ENCODE measurements at regions of chr13 and their contacts with region 1.

Region 1: GRCh38 chr13:49278211-49278610 is 30.5 kb downstream of the CDADC1 start:
- DNase-seq: no peak
- H3K4me3 ChIP-seq: no peak overlapping the region
- H3K27ac ChIP-seq: no peak overlapping the region
- H3K4me1 ChIP-seq: no peaks in the 10 kb centered on the region
- H3K27me3 ChIP-seq: no peaks in the 10 kb centered on the region
- CTCF ChIP-seq: no peak
- POLR2A ChIP-seq: no peak

Region 2: GRCh38 chr13:48595431-48596429 is 682.5 kb before region 1 on chr13:
- CTCF ChIA-PET with region 1: no interaction called
- POLR2A ChIA-PET with region 1: no interaction called
- dilution Hi-C with region 1: no loop called
- intact Hi-C with region 1: loop called (anchors 5 kb)
- DNase-seq: peak; percentile 91
- H3K4me3 ChIP-seq: no peak overlapping the region
- H3K27ac ChIP-seq: no peak overlapping the region
- H3K4me1 ChIP-seq: peaks cover 6% of the 10 kb centered on the region
- H3K27me3 ChIP-seq: peaks cover 4 to 7% of the 10 kb centered on the region in 2 experiments
- CTCF ChIP-seq: peak; percentile 49 to 66
- POLR2A ChIP-seq: no peak

Region 3: DNA sequence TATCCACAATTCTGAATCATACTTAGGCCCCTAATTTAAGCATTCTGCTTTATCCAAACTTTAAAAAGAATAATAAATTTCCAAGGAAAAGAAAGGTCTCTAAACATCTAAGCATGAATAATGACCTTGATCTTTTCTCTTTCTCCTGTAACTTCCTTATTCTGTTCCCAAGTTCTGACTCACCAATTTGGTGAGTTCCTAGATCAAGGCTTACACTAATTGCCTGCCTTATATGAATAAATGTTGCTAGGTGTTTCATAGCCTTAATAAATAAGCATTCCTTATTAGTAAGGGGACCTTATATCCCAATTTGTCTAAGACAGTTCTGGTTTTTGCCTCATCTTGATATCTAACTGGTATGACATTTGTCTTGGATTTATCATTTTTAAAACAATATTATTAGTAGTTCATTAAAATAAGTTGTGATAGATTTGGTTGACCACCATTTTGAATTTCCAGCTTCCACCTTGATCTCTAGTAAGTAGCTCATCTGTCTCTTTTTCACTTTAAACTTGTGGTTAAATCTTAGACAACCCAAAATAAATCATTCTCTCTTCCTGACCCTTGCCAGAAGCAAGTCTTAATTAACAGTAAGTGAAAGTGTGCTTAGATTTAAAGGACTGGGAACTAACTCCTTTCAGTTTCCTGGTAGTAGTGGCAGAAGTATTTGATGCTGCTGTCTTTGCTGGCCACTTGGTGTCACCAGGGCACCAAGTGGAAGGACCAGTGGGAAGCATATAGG is 179.3 kb before region 1 on chr13:
- CTCF ChIA-PET with region 1: interaction called, 123 read pairs
- POLR2A ChIA-PET with region 1: no interaction called
- dilution Hi-C with region 1: no loop called
- intact Hi-C with region 1: loop called (anchors 1 kb)
- DNase-seq: peak; percentile 65
- H3K4me3 ChIP-seq: peak overlapping the region in 1 of 3 experiments; percentile 12
- H3K27ac ChIP-seq: peak overlapping the region; percentile 70
- H3K4me1 ChIP-seq: peaks cover 24% of the 10 kb centered on the region
- H3K27me3 ChIP-seq: no peaks in the 10 kb centered on the region
- CTCF ChIP-seq: peak in 1 of 2 donors; percentile 42
- POLR2A ChIP-seq: no peak

Region 4: DNA sequence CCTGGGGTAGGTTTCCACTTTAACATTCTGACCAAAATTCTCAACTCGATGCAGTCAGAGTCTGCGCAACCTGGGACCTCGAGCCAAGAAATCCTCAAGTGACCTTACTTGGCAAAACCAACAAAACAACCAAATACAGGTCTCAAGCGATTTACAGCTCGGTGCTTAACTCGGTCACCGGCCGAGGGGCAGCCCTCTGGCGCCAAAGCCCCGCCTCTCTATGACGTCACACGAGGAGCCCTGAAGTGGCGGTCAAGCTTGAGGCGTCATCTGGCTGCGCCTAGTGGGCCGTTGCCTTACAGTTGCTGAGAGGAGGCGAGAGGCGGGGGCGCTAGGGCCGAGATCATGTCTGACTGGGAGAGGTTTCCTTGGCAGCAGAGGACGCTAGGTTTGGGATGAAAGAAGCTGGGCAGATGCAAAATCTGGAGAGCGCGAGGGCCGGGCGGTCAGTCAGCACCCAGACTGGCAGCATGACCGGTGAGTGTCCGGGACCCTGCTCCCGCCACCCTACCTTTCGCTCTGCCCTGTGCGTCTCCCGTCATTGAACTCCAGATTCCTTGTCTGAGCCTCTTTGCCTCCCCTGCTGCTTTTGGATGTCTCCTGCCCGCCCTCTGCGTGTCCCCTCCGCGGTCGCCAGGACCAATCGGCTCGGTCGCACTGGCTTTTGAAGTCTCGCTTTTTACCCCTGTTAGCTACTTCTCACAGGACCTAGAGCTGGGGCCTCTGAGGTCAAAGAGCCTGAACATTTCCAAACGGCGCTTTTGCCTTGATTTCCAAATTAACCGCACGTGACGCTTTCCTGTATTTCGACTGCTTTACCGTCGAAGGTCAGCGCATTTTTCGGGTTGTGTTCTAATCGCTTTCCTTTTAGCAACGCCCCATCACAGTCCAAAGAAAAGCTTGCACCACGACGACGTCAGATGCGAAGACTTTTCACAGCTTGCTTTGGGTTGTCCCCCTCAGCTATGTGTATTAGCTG is 30.3 kb before region 1 on chr13 and contains the start of gene CDADC1:
- CTCF ChIA-PET with region 1: interaction called, 34 read pairs
- POLR2A ChIA-PET with region 1: no interaction called
- dilution Hi-C with region 1: no loop called
- intact Hi-C with region 1: no loop called
- DNase-seq: peak; percentile 97
- H3K4me3 ChIP-seq: peak within 1 kb of the TSS; percentile 53 to 95 (median 86)
- H3K27ac ChIP-seq: peak within 1 kb of the TSS; percentile 53
- H3K4me1 ChIP-seq: peaks cover 11% of the 10 kb centered on the region
- H3K27me3 ChIP-seq: peaks cover 0 to 3% of the 10 kb centered on the region in 2 experiments
- CTCF ChIP-seq: no peak
- POLR2A ChIP-seq: peak; percentile 82
- total RNA-seq, gene CDADC1: 9.1 and 9.9 TPM in 2 replicates

Region 5: DNA sequence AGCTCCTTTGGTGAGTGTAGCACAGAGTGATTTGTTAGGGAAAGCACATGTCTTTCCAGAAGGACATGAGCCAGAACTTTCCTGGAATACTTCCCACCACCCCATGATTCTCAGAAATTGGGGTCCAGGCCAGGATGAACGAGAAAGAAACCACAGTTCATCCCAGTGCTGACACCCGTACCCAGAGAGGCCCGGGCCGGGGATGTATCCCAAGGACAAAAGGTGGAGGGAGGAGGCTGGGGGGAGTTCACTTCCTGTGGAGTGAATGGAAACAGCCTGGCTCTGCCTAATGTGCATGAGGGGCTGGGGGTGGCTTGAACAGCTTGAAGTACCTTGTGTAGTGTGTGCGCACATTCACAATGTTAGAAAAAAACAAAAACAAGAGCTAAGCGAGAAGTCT is 17.0 kb after region 1 on chr13:
- CTCF ChIA-PET with region 1: interaction called, 15 read pairs
- POLR2A ChIA-PET with region 1: no interaction called
- dilution Hi-C with region 1: no loop called
- intact Hi-C with region 1: no loop called
- DNase-seq: no peak
- H3K4me3 ChIP-seq: no peak overlapping the region
- H3K27ac ChIP-seq: no peak overlapping the region
- H3K4me1 ChIP-seq: peaks cover 5% of the 10 kb centered on the region
- H3K27me3 ChIP-seq: no peaks in the 10 kb centered on the region
- CTCF ChIP-seq: no peak
- POLR2A ChIP-seq: no peak

Region 6: DNA sequence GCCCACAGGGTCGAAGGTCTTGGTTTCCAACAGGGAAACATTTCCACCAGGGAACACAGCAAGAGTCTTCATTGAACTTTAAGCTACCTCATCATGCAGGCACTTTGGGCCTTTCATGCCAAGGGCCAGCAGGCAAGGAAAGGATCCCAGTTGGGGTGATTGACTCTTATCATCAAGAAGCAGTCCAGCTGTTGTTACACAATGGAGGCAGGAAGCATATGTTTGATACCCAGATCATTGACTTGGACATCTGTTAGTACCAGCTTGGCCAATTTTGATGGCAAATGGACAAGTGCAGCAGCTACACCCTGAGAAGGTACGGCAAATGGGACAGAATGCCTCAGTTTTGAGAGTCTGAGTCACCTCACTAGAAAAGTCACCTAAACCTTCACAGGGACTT is 318.0 kb after region 1 on chr13:
- CTCF ChIA-PET with region 1: no interaction called
- POLR2A ChIA-PET with region 1: no interaction called
- dilution Hi-C with region 1: no loop called
- intact Hi-C with region 1: no loop called
- DNase-seq: no peak
- H3K4me3 ChIP-seq: no peak overlapping the region
- H3K27ac ChIP-seq: no peak overlapping the region
- H3K4me1 ChIP-seq: no peaks in the 10 kb centered on the region
- H3K27me3 ChIP-seq: no peaks in the 10 kb centered on the region
- CTCF ChIP-seq: no peak
- POLR2A ChIP-seq: no peak

Measured in endothelial cell of umbilical vein (primary cell).